HepG2 (cell line): ENCODE measurements at regions of chr13 and their contacts with region 1.

Region 1: DNA sequence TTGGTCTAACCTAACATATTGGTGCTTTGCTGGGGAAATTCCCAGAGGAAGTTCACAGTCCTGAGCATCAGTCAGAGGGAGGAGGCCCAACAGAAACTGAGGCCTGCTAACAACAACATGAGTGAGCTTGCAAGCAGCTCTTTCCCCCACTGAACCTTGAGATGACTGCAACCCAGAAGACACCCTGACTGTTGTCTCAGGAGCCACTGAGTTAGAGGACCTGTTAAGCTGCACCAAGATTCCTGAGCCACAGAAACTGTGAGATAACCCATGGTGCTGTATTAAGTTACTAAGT is 193.2 kb upstream of the UBL3 start:
- DNase-seq: no peak
- ATAC-seq: no peak
- H3K4me3 ChIP-seq: no peak overlapping the region
- H3K27ac ChIP-seq: no peak overlapping the region
- H3K4me1 ChIP-seq: 0 out of 2 replicates have a peak, but pooled peaks cover 10% of the 10 kb centered on the region
- H3K27me3 ChIP-seq: no peaks in the 10 kb centered on the region
- CTCF ChIP-seq: no peak
- EP300 ChIP-seq: no peak
- POLR2A ChIP-seq: no peak
- RAD21 ChIP-seq: no peak

Region 2: GRCh38 chr13:29999492-30000369 is 43.8 kb before region 1 on chr13:
- CTCF ChIA-PET with region 1: no interaction called
- POLR2A ChIA-PET with region 1: no interaction called
- in situ Hi-C with region 1: no loop called
- intact Hi-C with region 1: loop called (anchors 2 kb)
- DNase-seq: no peak
- ATAC-seq: no peak
- H3K4me3 ChIP-seq: no peak overlapping the region
- H3K27ac ChIP-seq: no peak overlapping the region
- H3K4me1 ChIP-seq: no peaks in the 10 kb centered on the region
- H3K27me3 ChIP-seq: no peaks in the 10 kb centered on the region
- CTCF ChIP-seq: no peak
- EP300 ChIP-seq: no peak
- POLR2A ChIP-seq: no peak
- RAD21 ChIP-seq: no peak

Region 3: DNA sequence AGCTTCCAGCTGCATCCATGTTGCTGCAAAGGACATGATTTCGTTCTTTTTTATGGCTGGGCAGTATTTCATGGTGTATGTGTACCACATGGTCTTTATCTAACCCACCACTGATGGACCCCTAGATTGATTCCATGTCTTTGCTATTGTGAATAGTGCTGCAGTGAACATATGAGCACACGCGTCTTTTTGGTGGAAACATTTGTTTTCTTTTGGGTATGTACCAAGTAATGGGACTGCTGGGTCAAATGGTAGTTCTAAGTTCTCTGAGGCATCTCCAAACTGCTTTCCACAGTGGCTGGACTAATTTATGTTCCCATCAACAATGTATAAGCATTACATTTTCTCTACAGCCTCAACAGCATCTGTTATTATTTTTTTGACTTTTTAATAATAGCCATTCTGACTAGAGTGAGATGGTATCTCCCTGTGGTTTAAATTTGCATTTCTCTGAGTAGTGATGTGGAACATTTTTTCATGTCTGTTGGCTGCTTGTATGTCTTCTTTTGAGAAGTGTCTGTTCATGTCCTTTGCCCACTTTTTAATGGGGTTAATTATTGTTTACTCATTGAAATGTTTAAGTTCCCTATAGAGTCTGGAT is 372.0 kb after region 1 on chr13:
- CTCF ChIA-PET with region 1: no interaction called
- POLR2A ChIA-PET with region 1: no interaction called
- in situ Hi-C with region 1: no loop called
- intact Hi-C with region 1: no loop called
- DNase-seq: no peak
- ATAC-seq: no peak
- H3K4me3 ChIP-seq: no peak overlapping the region
- H3K27ac ChIP-seq: no peak overlapping the region
- H3K4me1 ChIP-seq: no peaks in the 10 kb centered on the region
- H3K27me3 ChIP-seq: peaks cover 0 to 20% of the 10 kb centered on the region in 2 experiments
- CTCF ChIP-seq: no peak
- EP300 ChIP-seq: no peak
- POLR2A ChIP-seq: no peak
- RAD21 ChIP-seq: no peak